Activated T-helper 2 cell treated with anti-CD3 and anti-CD28 coated beads, Interferon-gamma antibody, Interleukin-2, Interleukin-4, amounts not matched to agents 10 μg/mL and 5 μg/mL and 100 μg/mL, durations not matched to agents 14 hours and 24 hours and 36 hours (primary cell): ENCODE measurements at regions of chr10 and their contacts with region 1.

Region 1: GRCh38 chr10:14837757-14838581 is at the starts of genes CDNF, HSPA14 and MSANTD7:
- DNase-seq: peak; percentile 100
- H3K4me3 Mint-ChIP-seq: peak within 1 kb of the TSS; percentile 92
- H3K27ac Mint-ChIP-seq: peak within 1 kb of the TSS; percentile 95
- H3K4me1 Mint-ChIP-seq: peaks cover 19% of the 10 kb centered on the region
- H3K27me3 Mint-ChIP-seq: no peaks in the 10 kb centered on the region
- total RNA-seq, gene CDNF: 0.39 and 0.67 TPM in 2 replicates
- total RNA-seq, gene HSPA14: 34.1 and 34.5 TPM in 2 replicates
- total RNA-seq, gene MSANTD7: 22.3 and 25.6 TPM in 2 replicates

Region 2: DNA sequence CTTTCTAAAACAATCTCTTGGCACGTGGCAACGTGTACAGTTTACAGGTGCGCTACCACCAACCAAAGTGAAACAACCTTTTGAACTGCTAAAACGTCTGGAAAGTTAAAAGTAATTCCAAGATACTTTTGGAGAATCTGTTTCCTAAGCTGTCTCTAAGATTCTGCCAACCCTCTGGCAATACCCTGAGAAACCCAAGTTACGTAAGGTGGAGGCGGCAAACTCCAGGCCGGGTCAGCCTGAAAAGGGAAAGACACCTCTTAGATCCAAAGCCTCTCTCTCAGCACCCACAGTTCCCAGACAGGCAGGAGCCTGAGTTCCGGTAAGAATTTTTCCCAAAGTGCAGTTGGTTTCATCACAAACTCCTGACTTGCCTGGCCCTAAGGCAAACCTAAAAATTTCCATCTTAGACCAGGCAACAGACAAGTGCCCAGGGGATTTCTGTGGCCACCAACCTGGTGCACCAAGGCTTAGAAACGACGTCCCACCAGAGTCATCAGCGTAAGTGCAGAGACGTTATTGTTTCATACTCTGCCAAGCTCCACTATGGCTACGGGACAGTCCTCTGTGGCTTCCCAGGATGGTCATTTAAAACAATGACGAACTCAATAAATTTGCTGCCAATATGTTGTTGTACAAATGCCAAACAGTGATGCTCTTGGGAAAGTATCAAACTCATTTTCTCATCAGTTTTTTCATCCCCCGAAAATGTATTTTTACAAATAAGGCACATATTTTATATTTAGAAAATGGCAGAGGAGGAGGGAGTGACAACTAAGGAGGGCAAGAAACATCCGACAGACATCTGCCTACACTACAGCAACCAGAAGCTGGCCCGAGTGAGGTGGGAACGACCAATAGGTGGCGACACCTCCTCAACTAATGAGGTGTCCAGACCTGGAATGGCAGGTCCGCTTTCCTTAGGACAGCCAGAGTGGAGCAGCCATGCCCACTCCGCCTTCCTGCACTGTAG is 301.4 kb before region 1 on chr10:
- intact Hi-C with region 1: loop called (anchors 5 kb)
- DNase-seq: no peak
- H3K4me3 Mint-ChIP-seq: no peak overlapping the region
- H3K27ac Mint-ChIP-seq: no peak overlapping the region
- H3K4me1 Mint-ChIP-seq: peaks cover 54% of the 10 kb centered on the region
- H3K27me3 Mint-ChIP-seq: no peaks in the 10 kb centered on the region

Region 3: GRCh38 chr10:14553448-14553847 is 284.5 kb before region 1 on chr10:
- intact Hi-C with region 1: loop called (anchors 5 kb)
- DNase-seq: no peak
- H3K4me3 Mint-ChIP-seq: no peak overlapping the region
- H3K27ac Mint-ChIP-seq: peak overlapping the region; percentile 68
- H3K4me1 Mint-ChIP-seq: peaks cover 67% of the 10 kb centered on the region
- H3K27me3 Mint-ChIP-seq: no peaks in the 10 kb centered on the region

Region 4: GRCh38 chr10:14588084-14588937 is 249.7 kb before region 1 on chr10:
- intact Hi-C with region 1: loop called (anchors 5 kb)
- DNase-seq: peak; percentile 50
- H3K4me3 Mint-ChIP-seq: peak overlapping the region; percentile 60
- H3K27ac Mint-ChIP-seq: peak overlapping the region; percentile 90
- H3K4me1 Mint-ChIP-seq: peaks cover 81% of the 10 kb centered on the region
- H3K27me3 Mint-ChIP-seq: no peaks in the 10 kb centered on the region

Region 5: DNA sequence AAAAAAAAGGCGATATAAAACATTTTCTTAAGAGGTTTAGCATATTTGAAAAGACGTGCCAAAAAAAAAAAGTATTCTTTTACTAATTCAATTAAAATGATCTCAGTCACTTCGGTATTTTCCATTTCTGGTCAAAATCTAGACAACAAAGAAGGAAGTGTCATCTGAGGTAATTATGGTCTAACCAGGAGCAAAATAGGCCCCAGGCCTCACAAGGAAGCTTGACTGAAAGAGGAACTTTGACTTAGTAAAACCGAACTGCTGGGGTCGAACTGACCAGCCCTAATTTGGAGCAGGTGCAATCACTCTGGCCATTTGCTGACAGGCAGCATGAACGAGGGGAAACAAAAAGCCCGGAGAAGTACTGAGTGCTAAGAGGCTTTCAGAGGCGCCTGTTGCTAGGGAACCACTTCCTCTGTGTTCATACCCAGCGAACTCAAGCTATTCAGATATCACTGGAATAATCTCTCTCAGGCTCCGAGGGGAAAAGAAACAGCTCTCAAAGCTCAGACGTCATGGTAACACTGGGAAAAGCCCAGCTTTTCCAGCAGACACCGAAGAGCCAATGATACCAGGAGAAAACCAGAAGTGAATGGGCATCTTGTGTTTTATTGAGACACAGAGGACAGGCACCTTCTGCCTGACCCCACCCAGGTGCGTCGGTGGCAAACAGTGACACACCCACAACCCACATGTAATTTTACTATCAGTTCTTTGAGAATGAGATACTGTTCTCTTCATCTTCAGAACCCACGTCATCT is 189.8 kb before region 1 on chr10:
- intact Hi-C with region 1: loop called (anchors 1 kb)
- DNase-seq: peak; percentile 73
- H3K4me3 Mint-ChIP-seq: peak overlapping the region; percentile 63
- H3K27ac Mint-ChIP-seq: peak overlapping the region; percentile 96
- H3K4me1 Mint-ChIP-seq: peaks cover 68% of the 10 kb centered on the region
- H3K27me3 Mint-ChIP-seq: no peaks in the 10 kb centered on the region

Region 6: GRCh38 chr10:14859775-14860174 is 21.8 kb after region 1 on chr10:
- intact Hi-C with region 1: no loop called
- DNase-seq: no peak
- H3K4me3 Mint-ChIP-seq: no peak overlapping the region
- H3K27ac Mint-ChIP-seq: no peak overlapping the region
- H3K4me1 Mint-ChIP-seq: no peaks in the 10 kb centered on the region
- H3K27me3 Mint-ChIP-seq: no peaks in the 10 kb centered on the region

Region 7: DNA sequence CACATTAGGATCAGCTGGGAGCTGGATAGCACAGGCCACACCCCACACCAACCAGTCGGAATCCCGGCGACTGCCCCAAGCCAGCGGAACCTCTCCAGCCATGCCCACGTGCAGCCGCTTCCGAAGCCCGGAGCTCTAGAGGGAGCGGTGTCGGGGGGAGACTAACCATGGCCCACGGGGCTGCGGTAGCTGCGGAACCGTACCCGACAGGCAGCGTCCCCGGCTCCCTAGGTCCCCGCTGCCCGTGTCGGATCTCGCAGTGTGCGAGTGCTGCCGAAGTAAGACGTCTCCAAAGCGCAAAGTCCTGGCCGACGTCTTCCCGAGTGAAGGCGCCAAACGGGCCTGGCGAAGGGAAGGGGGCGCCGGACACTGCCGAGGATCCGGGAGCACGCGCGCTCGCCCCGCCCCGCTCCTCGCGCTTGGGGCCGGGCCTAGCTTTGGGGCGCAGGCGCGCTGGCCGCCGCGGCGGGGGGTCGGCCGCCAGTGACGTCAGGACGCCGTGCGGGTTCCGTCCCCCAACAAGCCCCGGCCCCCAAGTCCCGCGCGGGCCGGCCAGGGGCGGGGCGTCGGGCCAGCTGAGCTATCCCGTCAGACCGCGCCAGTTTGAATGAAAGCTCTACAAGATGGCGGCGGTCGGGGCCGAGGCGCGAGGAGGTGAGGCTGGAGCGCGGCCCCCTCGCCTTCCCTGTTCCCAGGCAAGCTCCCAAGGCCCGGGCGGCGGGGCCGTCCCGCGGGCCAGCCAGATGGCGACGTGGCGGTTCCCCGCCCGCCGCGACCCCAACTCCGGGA is 40.5 kb after region 1 on chr10 and contains the start of gene SUV39H2:
- intact Hi-C with region 1: loop called (anchors 1 kb)
- DNase-seq: peak; percentile 93
- H3K4me3 Mint-ChIP-seq: peak within 1 kb of the TSS; percentile 94
- H3K27ac Mint-ChIP-seq: peak within 1 kb of the TSS; percentile 88
- H3K4me1 Mint-ChIP-seq: peaks cover 34% of the 10 kb centered on the region
- H3K27me3 Mint-ChIP-seq: no peaks in the 10 kb centered on the region
- total RNA-seq, gene SUV39H2: 44.0 and 45.0 TPM in 2 replicates

Region 8: GRCh38 chr10:14959276-14960057 is 121.5 kb after region 1 on chr10 and contains the start of gene MEIG1:
- intact Hi-C with region 1: loop called (anchors 2 kb)
- DNase-seq: peak; percentile 88
- H3K4me3 Mint-ChIP-seq: peak within 1 kb of the TSS; percentile 94
- H3K27ac Mint-ChIP-seq: peak within 1 kb of the TSS; percentile 99
- H3K4me1 Mint-ChIP-seq: peaks cover 29% of the 10 kb centered on the region
- H3K27me3 Mint-ChIP-seq: no peaks in the 10 kb centered on the region
- total RNA-seq, gene MEIG1: 0.62 TPM in 1 of 2 replicates, not detected in the other